ENCODE measurements at regions of chr2 and their contacts with region 1.

Region 1: GRCh38 chr2:170815746-170816503 is 762 bp upstream of the GAD1 start:
- DNase-seq: peak in 4 of 5 donors; percentile 55 to 67 (median 64)
- H3K4me3 ChIP-seq: peak overlapping the region; percentile 39 to 44
- H3K4me3 Mint-ChIP-seq: peak overlapping the region; percentile 61 to 89 (median 76)
- H3K27ac ChIP-seq: no peak overlapping the region
- H3K27ac Mint-ChIP-seq: peak overlapping the region in 3 of 7 donors; percentile 80 to 87 (median 86)
- H3K4me1 ChIP-seq: peaks cover 55% of the 10 kb centered on the region
- H3K4me1 Mint-ChIP-seq: peaks cover 29 to 71% (median 50%) of the 10 kb centered on the region in 4 donors
- H3K27me3 ChIP-seq: peaks cover 64% of the 10 kb centered on the region
- H3K27me3 Mint-ChIP-seq: peaks cover 56 to 69% of the 10 kb centered on the region in 2 donors

Region 2: GRCh38 chr2:170324640-170325046 is 491.3 kb before region 1 on chr2:
- CTCF ChIA-PET with region 1: interaction called, 18 read pairs
- POLR2A ChIA-PET with region 1: no interaction called
- intact Hi-C with region 1: loop called (anchors 1 kb)
- DNase-seq: peak in 4 of 5 donors; percentile 14 to 28 (median 18)
- H3K4me3 ChIP-seq: no peak overlapping the region
- H3K4me3 Mint-ChIP-seq: no peak overlapping the region
- H3K27ac ChIP-seq: no peak overlapping the region
- H3K27ac Mint-ChIP-seq: no peak overlapping the region
- H3K4me1 ChIP-seq: no peaks in the 10 kb centered on the region
- H3K4me1 Mint-ChIP-seq: no peaks in the 10 kb centered on the region
- H3K27me3 ChIP-seq: no peaks in the 10 kb centered on the region
- H3K27me3 Mint-ChIP-seq: peaks cover 1 to 6% of the 10 kb centered on the region in 2 donors

Region 3: DNA sequence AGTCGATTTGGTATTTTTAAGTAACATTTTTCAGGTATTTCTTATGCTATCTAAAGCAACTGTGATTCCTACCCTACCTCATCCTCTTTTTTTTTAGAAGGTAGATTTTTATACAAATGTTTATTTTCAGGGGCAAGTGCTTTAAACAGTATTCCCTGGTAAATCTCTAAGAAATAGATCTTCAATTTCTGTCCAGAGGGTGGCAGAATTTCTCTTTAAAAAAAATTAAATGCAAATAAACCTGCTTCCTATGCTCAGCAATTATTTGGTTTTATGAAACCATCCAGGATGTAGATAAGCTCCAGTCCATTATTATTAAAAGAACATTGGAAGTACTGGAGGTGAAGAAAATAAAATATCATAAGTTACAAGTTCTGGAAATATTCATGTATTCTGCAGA is 446.0 kb before region 1 on chr2:
- CTCF ChIA-PET with region 1: interaction called, 28 read pairs
- POLR2A ChIA-PET with region 1: no interaction called
- intact Hi-C with region 1: no loop called
- DNase-seq: no peak
- H3K4me3 ChIP-seq: no peak overlapping the region
- H3K4me3 Mint-ChIP-seq: no peak overlapping the region
- H3K27ac ChIP-seq: no peak overlapping the region
- H3K27ac Mint-ChIP-seq: no peak overlapping the region
- H3K4me1 ChIP-seq: no peaks in the 10 kb centered on the region
- H3K4me1 Mint-ChIP-seq: peaks cover 7 to 17% (median 10%) of the 10 kb centered on the region in 4 donors
- H3K27me3 ChIP-seq: peaks cover 3% of the 10 kb centered on the region
- H3K27me3 Mint-ChIP-seq: peaks cover 41 to 48% of the 10 kb centered on the region in 2 donors

Region 4: GRCh38 chr2:170409164-170409535 is 406.8 kb before region 1 on chr2:
- CTCF ChIA-PET with region 1: interaction called, 144 read pairs
- POLR2A ChIA-PET with region 1: interaction called, 3 read pairs
- intact Hi-C with region 1: no loop called
- DNase-seq: peak; percentile 52 to 69 (median 62)
- H3K4me3 ChIP-seq: no peak overlapping the region
- H3K4me3 Mint-ChIP-seq: peak overlapping the region; percentile 2 to 79 (median 52)
- H3K27ac ChIP-seq: no peak overlapping the region
- H3K27ac Mint-ChIP-seq: peak overlapping the region in 2 of 7 donors; percentile 27 to 91
- H3K4me1 ChIP-seq: peaks cover 7% of the 10 kb centered on the region
- H3K4me1 Mint-ChIP-seq: peaks cover 3 to 7% (median 6%) of the 10 kb centered on the region in 4 donors
- H3K27me3 ChIP-seq: peaks cover 13% of the 10 kb centered on the region
- H3K27me3 Mint-ChIP-seq: peaks cover 17 to 33% of the 10 kb centered on the region in 2 donors

Region 5: GRCh38 chr2:170651624-170652325 is 164.2 kb before region 1 on chr2:
- CTCF ChIA-PET with region 1: no interaction called
- POLR2A ChIA-PET with region 1: no interaction called
- intact Hi-C with region 1: loop called (anchors 5 kb)
- DNase-seq: peak; percentile 75 to 85 (median 77)
- H3K4me3 ChIP-seq: no peak overlapping the region
- H3K4me3 Mint-ChIP-seq: peak overlapping the region in 7 of 8 donors; percentile 5 to 63 (median 21)
- H3K27ac ChIP-seq: no peak overlapping the region
- H3K27ac Mint-ChIP-seq: peak overlapping the region in 4 of 7 donors; percentile 3 to 54 (median 26)
- H3K4me1 ChIP-seq: peaks cover 23% of the 10 kb centered on the region
- H3K4me1 Mint-ChIP-seq: peaks cover 16 to 31% (median 26%) of the 10 kb centered on the region in 4 donors
- H3K27me3 ChIP-seq: no peaks in the 10 kb centered on the region
- H3K27me3 Mint-ChIP-seq: peaks cover 0 to 2% of the 10 kb centered on the region in 2 donors

Region 6: DNA sequence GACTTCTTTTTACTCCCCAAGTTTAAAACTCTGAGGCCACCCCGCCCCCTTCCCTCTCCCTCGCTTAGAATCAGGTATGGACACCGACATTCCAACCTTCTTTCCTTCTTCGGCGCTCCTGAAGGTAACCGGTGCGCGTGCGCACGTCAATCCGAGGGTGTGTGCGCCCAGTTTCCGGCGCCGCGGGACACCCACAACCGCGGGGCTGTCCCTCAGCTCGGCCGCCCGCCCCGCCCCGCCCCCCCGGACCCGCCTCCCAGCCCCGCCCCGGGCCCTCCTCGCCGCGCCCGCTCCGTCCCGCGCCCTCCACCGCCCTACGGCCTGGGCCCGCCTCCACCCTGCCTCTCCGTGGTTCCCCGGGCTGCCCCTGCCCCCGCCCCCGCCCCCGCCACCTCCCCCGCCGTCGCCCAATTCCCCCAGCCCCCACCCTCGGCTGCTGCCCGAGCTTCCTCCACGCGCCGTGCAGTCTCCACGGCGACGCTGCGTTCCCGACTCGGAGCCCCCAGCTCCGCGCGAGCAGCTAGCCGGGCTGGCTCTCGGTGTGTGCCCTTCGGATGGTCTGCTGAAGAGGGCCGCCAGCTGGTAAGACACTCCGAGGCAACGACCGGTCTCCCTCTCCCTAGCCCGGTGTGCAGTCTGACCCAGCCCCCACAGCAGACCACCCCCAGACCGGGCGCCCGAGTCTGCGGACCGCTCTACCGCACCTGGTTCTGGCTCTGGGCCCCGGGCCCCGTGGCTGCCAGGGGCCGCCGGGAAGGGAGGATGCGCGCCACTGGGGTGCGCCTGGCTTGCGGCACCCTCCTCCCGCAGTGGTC is 45.1 kb before region 1 on chr2:
- CTCF ChIA-PET with region 1: interaction called, 4 read pairs
- POLR2A ChIA-PET with region 1: no interaction called
- intact Hi-C with region 1: loop called (anchors 2 kb)
- DNase-seq: peak; percentile 48 to 71 (median 62)
- H3K4me3 ChIP-seq: peak overlapping the region; percentile 63 to 87
- H3K4me3 Mint-ChIP-seq: peak overlapping the region; percentile 79 to 91 (median 88)
- H3K27ac ChIP-seq: no peak overlapping the region
- H3K27ac Mint-ChIP-seq: peak overlapping the region; percentile 14 to 79 (median 52)
- H3K4me1 ChIP-seq: peaks cover 11% of the 10 kb centered on the region
- H3K4me1 Mint-ChIP-seq: peaks cover 10 to 16% (median 11%) of the 10 kb centered on the region in 4 donors
- H3K27me3 ChIP-seq: no peaks in the 10 kb centered on the region
- H3K27me3 Mint-ChIP-seq: peaks cover 4 to 13% of the 10 kb centered on the region in 2 donors